Sigmoid colon (tissue), 7 donors: ENCODE measurements at regions of chr1 and their contacts with region 1.

Region 1: GRCh38 chr1:91404151-91405012 is at the start of gene HFM1:
- DNase-seq: peak; percentile 92
- H3K4me3 ChIP-seq: peak within 1 kb of the TSS; percentile 61 to 71 (median 64)
- H3K27ac ChIP-seq: peak within 1 kb of the TSS; percentile 83 to 90 (median 88)
- H3K4me1 ChIP-seq: peaks cover 0 to 6% (median 4%) of the 10 kb centered on the region in 4 donors
- H3K27me3 ChIP-seq: no peaks in the 10 kb centered on the region
- CTCF ChIP-seq: no peak
- EP300 ChIP-seq: no peak
- POLR2A ChIP-seq: no peak
- total RNA-seq, gene HFM1: 1.6 to 5.8 (median 3.7) TPM

Region 2: DNA sequence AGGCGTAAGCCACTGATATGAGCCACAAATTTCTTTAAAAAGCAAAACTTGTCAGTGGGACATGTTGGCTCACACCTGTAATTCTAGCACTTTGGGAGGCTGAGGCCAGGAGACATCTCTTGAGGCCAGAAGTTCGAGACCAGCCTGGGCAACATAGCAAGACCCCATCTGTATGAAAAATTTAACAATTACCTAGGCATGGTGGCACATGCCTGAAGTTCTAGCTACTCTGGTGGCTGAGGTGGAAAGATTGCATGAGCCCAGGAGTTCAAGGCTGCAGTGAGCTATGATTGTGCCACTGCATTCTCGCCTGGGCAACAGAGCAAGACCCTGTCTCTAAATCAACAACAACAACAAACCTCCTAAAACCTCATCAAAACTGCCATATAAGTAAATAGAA is 539.7 kb before region 1 on chr1:
- intact Hi-C with region 1: no loop called
- DNase-seq: no peak
- H3K4me3 ChIP-seq: no peak overlapping the region
- H3K27ac ChIP-seq: no peak overlapping the region
- H3K4me1 ChIP-seq: no peaks in the 10 kb centered on the region
- H3K27me3 ChIP-seq: no peaks in the 10 kb centered on the region
- CTCF ChIP-seq: no peak
- EP300 ChIP-seq: no peak
- POLR2A ChIP-seq: no peak

Region 3: DNA sequence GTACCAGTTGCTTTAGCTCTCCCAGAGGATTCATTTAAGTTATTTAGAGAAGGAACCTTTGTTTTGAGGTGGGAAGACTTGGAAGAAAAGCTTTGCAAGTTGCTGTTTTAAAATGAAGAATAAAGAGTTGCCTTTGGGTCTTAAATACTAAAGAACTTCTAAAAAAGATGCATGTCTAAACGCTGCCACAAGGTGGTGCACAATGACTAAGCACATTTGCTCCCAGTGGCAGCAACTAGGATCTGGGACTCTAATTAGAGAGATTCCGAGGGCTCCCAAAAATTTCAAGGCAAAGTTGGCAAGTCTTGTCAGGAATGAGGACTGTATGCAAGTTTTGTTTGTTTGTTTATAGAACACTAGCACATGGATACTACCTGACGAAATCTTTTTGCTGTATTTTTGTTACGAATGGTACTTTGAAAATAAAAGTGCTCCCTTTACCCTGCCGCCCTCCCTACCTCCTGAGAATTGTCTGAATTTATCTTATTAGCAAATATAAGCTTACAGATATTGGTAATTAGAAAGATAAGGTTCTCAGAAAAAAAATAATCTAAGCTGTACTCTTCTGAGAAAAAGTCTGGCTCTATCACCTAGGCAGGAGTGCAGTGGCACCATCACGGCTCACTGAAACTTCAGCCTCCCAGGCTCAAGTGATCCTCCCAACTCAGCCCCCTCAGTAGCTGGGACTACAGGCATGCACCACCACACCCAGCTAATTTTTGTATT is 121.5 kb before region 1 on chr1:
- intact Hi-C with region 1: loop called (anchors 2 kb)
- DNase-seq: peak; percentile 73
- H3K4me3 ChIP-seq: peak overlapping the region in 2 of 4 donors; percentile 20
- H3K27ac ChIP-seq: no peak overlapping the region
- H3K4me1 ChIP-seq: peaks cover 0 to 5% (median 0%) of the 10 kb centered on the region in 4 donors
- H3K27me3 ChIP-seq: no peaks in the 10 kb centered on the region
- CTCF ChIP-seq: peak; percentile 41 to 79 (median 70)
- EP300 ChIP-seq: no peak
- POLR2A ChIP-seq: no peak

Region 4: DNA sequence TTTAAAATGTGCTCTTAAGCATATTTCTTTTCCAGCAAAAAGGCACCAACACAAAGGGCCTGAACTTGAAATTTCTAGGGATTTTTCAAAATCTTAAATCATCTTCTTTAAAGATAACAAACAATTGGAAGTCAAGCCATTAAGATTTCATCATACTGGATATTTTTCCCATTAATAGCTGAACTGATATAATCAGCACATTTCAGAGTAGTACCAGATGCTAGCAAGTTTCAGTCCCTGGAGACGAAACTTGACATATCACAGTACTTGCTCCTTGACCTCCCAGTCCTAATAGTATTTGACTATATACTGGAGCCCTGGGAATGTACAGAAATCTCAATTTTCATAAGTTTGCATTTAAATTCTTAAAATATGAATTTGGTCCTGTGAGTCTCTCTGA is 86.1 kb after region 1 on chr1:
- intact Hi-C with region 1: no loop called
- DNase-seq: no peak
- H3K4me3 ChIP-seq: no peak overlapping the region
- H3K27ac ChIP-seq: no peak overlapping the region
- H3K4me1 ChIP-seq: no peaks in the 10 kb centered on the region
- H3K27me3 ChIP-seq: no peaks in the 10 kb centered on the region
- CTCF ChIP-seq: no peak
- EP300 ChIP-seq: no peak
- POLR2A ChIP-seq: no peak

Region 5: DNA sequence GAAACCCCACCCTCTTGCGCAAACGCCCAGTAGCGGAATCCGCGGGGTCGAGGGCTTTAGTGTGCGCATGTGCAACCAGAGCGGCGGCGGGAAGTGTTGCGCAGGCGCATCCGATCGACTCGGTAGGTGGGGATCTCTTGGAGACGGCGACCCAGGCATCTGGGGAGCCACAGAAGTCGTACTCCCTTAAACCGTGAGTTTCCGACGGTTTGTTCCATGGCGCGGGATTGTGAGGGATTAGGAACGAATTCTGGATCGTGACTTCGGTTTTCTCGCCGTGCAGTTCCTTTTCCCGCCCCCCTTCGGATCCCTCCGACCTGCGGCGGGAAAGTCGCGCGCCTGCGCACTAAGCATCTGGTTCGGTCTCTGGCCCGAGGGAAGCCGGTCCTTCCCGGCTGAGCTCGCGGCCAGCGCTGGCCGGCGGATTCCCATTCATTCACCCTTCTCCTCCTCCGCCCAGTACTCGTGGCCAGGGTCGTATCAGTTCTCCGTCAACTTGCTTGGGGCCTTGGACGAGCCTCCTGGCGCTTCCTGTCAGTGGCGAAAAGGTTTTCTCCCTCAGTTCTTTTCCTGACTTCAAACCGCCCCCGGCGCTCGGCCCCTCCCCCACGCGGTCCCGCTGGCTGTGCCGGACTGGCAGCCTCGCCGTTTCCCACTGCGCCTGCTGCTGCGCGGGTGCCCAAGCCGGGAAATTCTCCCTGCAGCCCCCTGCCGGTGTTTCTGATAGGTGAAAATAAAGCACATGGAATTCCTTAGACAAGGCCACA is 96.6 kb after region 1 on chr1 and contains the start of gene CDC7:
- intact Hi-C with region 1: loop called (anchors 2 kb)
- DNase-seq: peak; percentile 97
- H3K4me3 ChIP-seq: peak within 1 kb of the TSS; percentile 57 to 77 (median 72)
- H3K27ac ChIP-seq: peak within 1 kb of the TSS; percentile 88 to 93 (median 92)
- H3K4me1 ChIP-seq: peaks cover 0 to 19% (median 16%) of the 10 kb centered on the region in 4 donors
- H3K27me3 ChIP-seq: no peaks in the 10 kb centered on the region
- CTCF ChIP-seq: no peak
- EP300 ChIP-seq: peak in 1 of 4 donors; percentile 45
- POLR2A ChIP-seq: no peak
- total RNA-seq, gene CDC7: 0.36 to 5.0 (median 2.1) TPM

Region 6: GRCh38 chr1:91924146-91924545 is 519.8 kb after region 1 on chr1:
- intact Hi-C with region 1: loop called (anchors 10 kb)
- DNase-seq: no peak
- H3K4me3 ChIP-seq: no peak overlapping the region
- H3K27ac ChIP-seq: no peak overlapping the region
- H3K4me1 ChIP-seq: no peaks in the 10 kb centered on the region
- H3K27me3 ChIP-seq: no peaks in the 10 kb centered on the region
- CTCF ChIP-seq: no peak
- EP300 ChIP-seq: no peak
- POLR2A ChIP-seq: no peak

Region 7: GRCh38 chr1:92298573-92299476 is 894.4 kb after region 1 on chr1 and contains the starts of genes GLMN and RPAP2:
- intact Hi-C with region 1: loop called (anchors 5 kb)
- DNase-seq: peak; percentile 85
- H3K4me3 ChIP-seq: peak within 1 kb of the TSS; percentile 69 to 83 (median 80)
- H3K27ac ChIP-seq: peak within 1 kb of the TSS; percentile 87 to 96 (median 94)
- H3K4me1 ChIP-seq: peaks cover 0 to 28% (median 16%) of the 10 kb centered on the region in 4 donors
- H3K27me3 ChIP-seq: no peaks in the 10 kb centered on the region
- CTCF ChIP-seq: peak in 1 of 4 experiments; percentile 6
- EP300 ChIP-seq: no peak
- POLR2A ChIP-seq: peak; percentile 47 to 55
- total RNA-seq, gene GLMN: 7.2 to 17.6 (median 9.8) TPM
- total RNA-seq, gene RPAP2: 11.1 to 21.2 (median 15.3) TPM